Endothelial cell of umbilical vein (primary cell): ENCODE measurements at regions of chr16 and their contacts with region 1.

Region 1: DNA sequence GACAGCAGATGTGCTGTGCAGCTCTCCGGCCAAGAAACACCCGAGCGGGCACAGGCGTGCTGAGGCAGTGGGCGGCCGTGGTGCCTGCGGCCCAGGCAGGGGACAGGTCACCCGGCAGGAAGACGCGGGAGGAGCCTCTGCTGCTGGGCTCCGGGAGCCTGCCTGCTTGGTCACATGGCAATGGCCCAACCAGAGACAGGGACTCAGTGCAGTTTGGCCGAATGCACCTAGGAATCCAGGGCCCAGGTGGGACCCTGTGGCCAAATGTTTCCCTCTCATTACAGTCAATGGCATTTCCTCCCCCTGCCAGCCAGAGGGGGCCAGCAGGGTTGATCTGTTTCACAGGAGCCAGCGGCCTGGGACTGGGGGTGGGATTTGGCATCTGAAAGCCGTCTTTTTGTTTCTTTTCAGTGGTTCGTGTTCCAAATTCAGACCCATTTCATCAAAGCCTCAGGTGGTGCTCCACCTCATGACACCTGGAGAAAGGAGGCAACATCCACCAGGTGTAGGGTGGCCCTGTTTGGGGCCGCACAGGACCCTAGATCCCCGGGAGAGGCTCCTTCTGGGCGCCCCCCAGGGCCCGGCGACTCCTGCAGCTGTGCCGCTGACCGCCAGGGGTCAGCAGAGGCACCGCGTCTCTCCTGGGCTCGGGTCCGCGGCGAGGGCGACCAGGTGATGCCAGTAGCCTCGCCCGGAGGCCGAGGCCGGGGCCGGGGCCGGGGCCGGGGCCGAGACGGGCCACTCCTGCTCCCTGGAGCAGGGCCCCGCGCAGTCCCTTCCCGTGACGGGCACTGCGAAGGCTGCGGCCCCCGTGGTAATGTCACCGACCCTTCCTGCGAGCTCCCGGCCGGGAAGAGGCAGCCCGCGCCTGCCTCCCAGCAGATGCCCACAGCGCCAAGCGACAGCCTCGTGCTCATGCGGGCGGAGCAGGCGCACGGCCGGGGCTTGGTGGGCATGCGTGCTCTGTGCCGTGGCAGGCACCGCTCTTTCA is 118.5 kb downstream of the C16orf78 start:
- DNase-seq: peak; percentile 34
- H3K4me3 ChIP-seq: peak overlapping the region in 1 of 3 experiments; percentile 13
- H3K27ac ChIP-seq: no peak overlapping the region
- H3K4me1 ChIP-seq: no peaks in the 10 kb centered on the region
- H3K27me3 ChIP-seq: no peaks in the 10 kb centered on the region
- CTCF ChIP-seq: peak; percentile 81 to 96
- POLR2A ChIP-seq: no peak

Region 2: GRCh38 chr16:49407873-49408550 is 84.1 kb before region 1 on chr16:
- CTCF ChIA-PET with region 1: no interaction called
- POLR2A ChIA-PET with region 1: no interaction called
- dilution Hi-C with region 1: no loop called
- intact Hi-C with region 1: loop called (anchors 1 kb)
- DNase-seq: peak; percentile 72
- H3K4me3 ChIP-seq: no peak overlapping the region
- H3K27ac ChIP-seq: no peak overlapping the region
- H3K4me1 ChIP-seq: no peaks in the 10 kb centered on the region
- H3K27me3 ChIP-seq: no peaks in the 10 kb centered on the region
- CTCF ChIP-seq: peak; percentile 71 to 81
- POLR2A ChIP-seq: no peak

Region 3: DNA sequence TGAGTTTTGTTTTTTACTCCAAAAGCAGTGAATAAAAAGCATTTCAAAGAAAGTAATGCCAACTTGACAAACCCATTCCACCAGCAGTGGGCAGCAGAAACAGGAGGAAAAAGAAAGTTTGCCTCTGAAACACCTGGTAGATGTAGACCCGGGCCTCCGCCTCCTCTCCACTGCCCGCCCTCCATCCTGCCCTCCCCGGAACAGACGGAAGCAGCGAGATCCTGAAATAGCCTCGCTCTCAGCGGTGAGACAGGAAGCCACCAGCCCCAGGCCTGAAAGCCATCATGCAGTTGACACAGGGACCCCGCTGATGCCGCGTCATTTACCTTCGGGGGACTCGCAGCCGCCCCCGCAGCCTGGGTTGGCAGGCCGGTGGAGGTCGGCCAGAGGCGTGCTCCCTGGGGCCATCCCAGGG is 50.7 kb before region 1 on chr16:
- CTCF ChIA-PET with region 1: no interaction called
- POLR2A ChIA-PET with region 1: no interaction called
- dilution Hi-C with region 1: no loop called
- intact Hi-C with region 1: loop called (anchors 5 kb)
- DNase-seq: no peak
- H3K4me3 ChIP-seq: no peak overlapping the region
- H3K27ac ChIP-seq: no peak overlapping the region
- H3K4me1 ChIP-seq: no peaks in the 10 kb centered on the region
- H3K27me3 ChIP-seq: no peaks in the 10 kb centered on the region
- CTCF ChIP-seq: no peak
- POLR2A ChIP-seq: no peak

Region 4: GRCh38 chr16:49592546-49593423 is 100.7 kb after region 1 on chr16:
- CTCF ChIA-PET with region 1: interaction called, 3 read pairs
- POLR2A ChIA-PET with region 1: no interaction called
- dilution Hi-C with region 1: no loop called
- intact Hi-C with region 1: loop called (anchors 1 kb)
- DNase-seq: peak; percentile 33
- H3K4me3 ChIP-seq: no peak overlapping the region
- H3K27ac ChIP-seq: no peak overlapping the region
- H3K4me1 ChIP-seq: peaks cover 4% of the 10 kb centered on the region
- H3K27me3 ChIP-seq: no peaks in the 10 kb centered on the region
- CTCF ChIP-seq: peak; percentile 64 to 88
- POLR2A ChIP-seq: no peak

Region 5: GRCh38 chr16:49701789-49702494 is 209.9 kb after region 1 on chr16:
- CTCF ChIA-PET with region 1: interaction called, 6 read pairs
- POLR2A ChIA-PET with region 1: no interaction called
- dilution Hi-C with region 1: no loop called
- intact Hi-C with region 1: loop called (anchors 2 kb)
- DNase-seq: no peak
- H3K4me3 ChIP-seq: no peak overlapping the region
- H3K27ac ChIP-seq: no peak overlapping the region
- H3K4me1 ChIP-seq: no peaks in the 10 kb centered on the region
- H3K27me3 ChIP-seq: peaks cover 11 to 15% of the 10 kb centered on the region in 2 experiments
- CTCF ChIP-seq: no peak
- POLR2A ChIP-seq: no peak

Region 6: GRCh38 chr16:49755313-49755620 is 263.2 kb after region 1 on chr16:
- CTCF ChIA-PET with region 1: no interaction called
- POLR2A ChIA-PET with region 1: no interaction called
- dilution Hi-C with region 1: no loop called
- intact Hi-C with region 1: loop called (anchors 1 kb)
- DNase-seq: peak; percentile 63
- H3K4me3 ChIP-seq: peak overlapping the region in 2 of 3 experiments; percentile 16 to 18
- H3K27ac ChIP-seq: no peak overlapping the region
- H3K4me1 ChIP-seq: peaks cover 12% of the 10 kb centered on the region
- H3K27me3 ChIP-seq: no peaks in the 10 kb centered on the region
- CTCF ChIP-seq: peak; percentile 26 to 46
- POLR2A ChIP-seq: no peak

Region 7: DNA sequence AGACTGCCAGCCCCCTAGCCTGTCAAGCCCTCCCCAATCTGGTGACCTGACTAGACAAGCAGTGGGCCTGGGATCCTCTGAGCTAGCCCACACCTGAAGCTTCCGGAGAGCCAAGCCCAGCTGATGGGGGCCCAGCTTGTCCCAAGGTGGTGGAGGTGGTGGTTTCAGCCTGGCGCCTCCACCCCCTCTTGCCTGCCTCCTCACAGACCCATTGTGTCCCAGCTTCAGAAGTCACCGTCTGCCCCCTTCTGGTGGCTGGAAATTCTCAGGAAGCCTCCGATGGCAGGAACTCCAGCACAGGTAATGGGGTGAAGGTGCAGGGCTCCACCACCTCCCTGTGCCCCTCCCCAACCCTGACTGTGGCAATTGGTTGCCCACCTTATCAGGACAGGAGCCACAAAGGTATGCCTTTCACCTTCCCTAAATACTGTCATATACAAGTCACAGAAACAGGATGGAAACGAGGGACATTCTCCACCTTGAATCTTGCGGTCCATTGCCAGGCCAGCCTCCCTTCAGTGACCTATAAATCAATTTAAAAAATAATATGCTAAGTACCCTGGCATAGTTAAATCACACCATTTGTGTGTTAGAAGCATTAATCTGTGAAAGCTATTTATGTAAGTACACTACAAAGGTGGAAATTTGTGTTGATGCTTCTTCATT is 429.9 kb after region 1 on chr16:
- CTCF ChIA-PET with region 1: interaction called, 19 read pairs
- POLR2A ChIA-PET with region 1: no interaction called
- dilution Hi-C with region 1: no loop called
- intact Hi-C with region 1: loop called (anchors 2 kb)
- DNase-seq: peak; percentile 52
- H3K4me3 ChIP-seq: no peak overlapping the region
- H3K27ac ChIP-seq: no peak overlapping the region
- H3K4me1 ChIP-seq: no peaks in the 10 kb centered on the region
- H3K27me3 ChIP-seq: no peaks in the 10 kb centered on the region
- CTCF ChIP-seq: peak; percentile 46 to 72
- POLR2A ChIP-seq: no peak